GM18951 (cell line): ENCODE measurements at regions of chr18 and their contacts with region 1.

Region 1: GRCh38 chr18:32552421-32553030 is 81.8 kb upstream of the GAREM1 start:
- POLR2A ChIP-seq: no peak

Region 2: GRCh38 chr18:32160547-32160946 is 392.0 kb before region 1 on chr18:
- in situ Hi-C with region 1: loop called (anchors 5 kb)
- POLR2A ChIP-seq: no peak

Region 3: GRCh38 chr18:32868406-32868805 is 315.9 kb after region 1 on chr18:
- in situ Hi-C with region 1: no loop called
- POLR2A ChIP-seq: no peak

Region 4: DNA sequence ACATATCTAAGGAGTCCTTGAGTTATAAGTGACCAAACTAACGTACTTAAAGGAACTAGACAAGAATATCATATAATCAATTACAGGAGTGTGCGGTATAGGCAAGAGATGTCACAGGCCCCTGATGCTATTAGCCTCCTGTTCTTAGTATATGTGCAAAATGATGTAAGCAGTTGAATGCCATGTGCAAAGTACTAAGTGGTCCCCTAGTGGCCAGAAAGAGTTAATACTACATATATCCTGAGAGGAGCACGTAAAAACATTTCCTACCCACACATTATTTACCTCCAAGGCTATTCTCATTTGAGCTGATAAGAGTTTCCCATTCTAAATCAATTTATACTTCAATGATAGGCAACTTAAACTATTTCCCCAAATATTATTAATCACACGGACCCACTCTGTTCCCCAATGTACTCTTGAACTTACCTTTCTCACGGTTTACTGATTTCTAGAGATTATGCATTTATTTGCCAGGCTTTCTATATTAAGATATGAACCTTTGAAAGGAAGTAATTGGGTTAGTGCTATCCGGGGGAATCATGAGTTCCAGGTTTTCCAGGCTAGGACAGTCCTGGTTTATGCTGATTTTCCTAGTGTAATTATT is 378.3 kb after region 1 on chr18:
- in situ Hi-C with region 1: no loop called
- POLR2A ChIP-seq: no peak